GM12878 (cell line): ENCODE measurements at regions of chr6 and their contacts with region 1.

Region 1: GRCh38 chr6:37169496-37170272 is at the start of gene PIM1:
- DNase-seq: peak; percentile 62
- ATAC-seq: peak; percentile 88
- H3K4me3 ChIP-seq: peak within 1 kb of the TSS; percentile 83
- H3K27ac ChIP-seq: peak within 1 kb of the TSS; percentile 65
- H3K4me1 ChIP-seq: peaks cover 16% of the 10 kb centered on the region
- H3K27me3 ChIP-seq: no peaks in the 10 kb centered on the region
- CTCF ChIP-seq: peak in 1 of 3 experiments; percentile 6; a peak in 1 of 6 replicates
- EP300 ChIP-seq: no peak
- POLR2A ChIP-seq: peak; percentile 81
- RAD21 ChIP-seq: no peak
- polyA plus RNA-seq, gene PIM1: 0.66 to 3.0 TPM

Region 2: DNA sequence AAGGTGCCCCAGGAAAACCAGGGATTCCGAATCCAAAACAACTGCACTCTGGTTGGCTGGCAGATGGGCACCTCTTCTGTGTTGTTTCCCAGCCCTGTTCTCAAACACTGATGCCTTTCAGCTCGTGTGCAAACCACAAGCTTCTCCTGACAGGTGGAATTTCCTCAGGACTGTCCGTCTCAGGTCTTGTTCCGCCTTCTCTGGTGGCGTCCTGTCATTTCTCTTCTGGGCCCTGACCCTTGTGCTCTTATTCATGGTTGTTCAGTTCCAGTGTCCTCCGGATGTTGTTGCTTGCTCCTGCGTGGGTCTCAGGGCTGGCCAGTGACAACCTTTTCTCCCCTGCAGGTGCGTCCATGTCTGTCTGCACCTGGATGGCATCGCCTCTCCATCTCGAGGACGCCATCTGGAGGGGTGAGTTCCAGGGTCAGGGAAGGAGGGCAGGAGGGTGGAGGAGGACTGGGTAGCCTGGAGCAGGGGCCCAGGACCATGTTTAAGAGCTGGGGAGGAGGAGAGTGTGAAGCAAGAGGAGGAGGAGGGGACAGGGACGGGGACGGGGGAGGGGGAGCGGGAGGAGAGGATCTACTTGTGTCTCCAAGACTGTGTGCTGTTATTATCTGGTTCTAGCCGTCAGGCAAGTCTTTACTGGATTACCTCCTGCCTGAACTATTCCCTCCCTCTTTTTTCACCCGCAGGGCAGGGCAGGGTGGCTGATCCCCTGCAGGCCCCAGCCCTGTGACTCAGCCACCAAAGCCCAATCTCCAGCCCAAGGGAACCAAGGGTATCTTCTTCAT is 1625.0 kb before region 1 on chr6:
- CTCF ChIA-PET with region 1: no interaction called
- POLR2A ChIA-PET with region 1: no interaction called
- RAD21 ChIA-PET with region 1: no interaction called
- SMC1A ChIA-PET with region 1: no interaction called
- in situ Hi-C with region 1: no loop called
- intact Hi-C with region 1: no loop called
- DNase-seq: no peak
- ATAC-seq: no peak
- H3K4me3 ChIP-seq: no peak overlapping the region
- H3K27ac ChIP-seq: no peak overlapping the region
- H3K4me1 ChIP-seq: no peaks in the 10 kb centered on the region
- H3K27me3 ChIP-seq: no peaks in the 10 kb centered on the region; a peak in 1 of 4 replicates
- CTCF ChIP-seq: no peak
- EP300 ChIP-seq: no peak
- POLR2A ChIP-seq: no peak
- RAD21 ChIP-seq: no peak

Region 3: DNA sequence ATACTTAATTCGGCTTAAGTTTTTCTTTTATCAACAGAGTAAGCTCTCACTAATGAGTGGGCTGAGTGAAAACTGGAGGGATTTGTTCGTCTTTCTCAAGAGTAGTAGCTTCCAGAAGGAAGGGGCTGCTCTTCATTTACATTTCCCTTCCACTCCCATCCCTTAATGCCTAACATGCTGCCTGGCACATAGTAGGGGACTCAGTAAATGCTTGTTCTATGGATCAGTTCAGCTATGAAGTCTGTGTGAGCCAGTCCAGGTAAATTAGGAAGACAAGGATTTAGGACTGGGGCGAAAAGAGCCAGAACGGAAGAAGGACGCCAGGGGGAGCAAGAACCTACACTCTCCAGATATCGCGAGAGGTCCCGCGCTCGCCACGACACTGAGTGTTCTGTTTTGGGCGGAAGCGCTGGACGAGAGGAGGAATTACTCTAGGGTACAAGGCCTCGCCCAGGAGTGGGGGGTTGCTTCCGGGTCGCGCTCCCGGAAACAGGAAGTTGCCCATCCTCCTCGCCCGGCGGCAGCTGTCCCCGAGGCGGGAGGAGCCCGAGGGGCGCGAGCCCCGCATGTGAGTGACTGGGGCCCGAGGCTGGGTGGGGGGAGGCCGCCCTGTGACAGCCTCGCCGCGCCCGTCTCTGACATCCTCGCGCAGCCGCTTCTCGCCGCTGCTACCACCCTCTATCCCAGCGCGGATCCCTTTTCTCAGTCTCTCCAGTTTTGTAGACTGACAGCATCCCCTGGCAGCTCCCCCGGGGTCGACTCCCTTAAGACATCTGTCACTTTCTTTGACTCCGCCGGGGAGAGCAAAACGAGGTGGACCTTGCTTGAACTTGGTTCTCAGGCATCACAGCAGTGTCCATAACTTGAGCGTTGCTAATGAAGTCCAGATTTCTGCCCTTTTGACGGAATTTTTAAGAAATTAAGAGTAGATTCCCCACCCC is 284.0 kb before region 1 on chr6 and contains the start of gene C6orf89:
- CTCF ChIA-PET with region 1: interaction called, 7 read pairs
- POLR2A ChIA-PET with region 1: interaction called, 4 read pairs
- RAD21 ChIA-PET with region 1: interaction called, 5 read pairs
- SMC1A ChIA-PET with region 1: interaction called, 5 read pairs
- in situ Hi-C with region 1: no loop called
- intact Hi-C with region 1: loop called (anchors 5 kb)
- DNase-seq: peak; percentile 92
- ATAC-seq: peak; percentile 98
- H3K4me3 ChIP-seq: peak within 1 kb of the TSS; percentile 99
- H3K27ac ChIP-seq: peak within 1 kb of the TSS; percentile 77
- H3K4me1 ChIP-seq: no peaks in the 10 kb centered on the region
- H3K27me3 ChIP-seq: no peaks in the 10 kb centered on the region
- CTCF ChIP-seq: peak; percentile 72 to 83 (median 79)
- EP300 ChIP-seq: no peak
- POLR2A ChIP-seq: peak; percentile 88
- RAD21 ChIP-seq: peak; percentile 24; the same call in 1 of the 2 replicates
- polyA plus RNA-seq, gene C6orf89: 10.8 to 11.4 TPM

Region 4: GRCh38 chr6:37051138-37052026 is 118.3 kb before region 1 on chr6:
- CTCF ChIA-PET with region 1: interaction called, 260 read pairs
- POLR2A ChIA-PET with region 1: interaction called, 43 read pairs
- RAD21 ChIA-PET with region 1: interaction called, 255 read pairs
- SMC1A ChIA-PET with region 1: interaction called, 266 read pairs
- in situ Hi-C with region 1: loop called (anchors 5 kb)
- intact Hi-C with region 1: loop called (anchors 1 kb)
- DNase-seq: peak; percentile 59
- ATAC-seq: peak; percentile 88
- H3K4me3 ChIP-seq: no peak overlapping the region
- H3K27ac ChIP-seq: no peak overlapping the region
- H3K4me1 ChIP-seq: peaks cover 40% of the 10 kb centered on the region
- H3K27me3 ChIP-seq: no peaks in the 10 kb centered on the region
- CTCF ChIP-seq: peak; percentile 88 to 95 (median 93); a peak in 5 of 6 replicates
- EP300 ChIP-seq: no peak
- POLR2A ChIP-seq: no peak
- RAD21 ChIP-seq: peak; percentile 93

Region 5: DNA sequence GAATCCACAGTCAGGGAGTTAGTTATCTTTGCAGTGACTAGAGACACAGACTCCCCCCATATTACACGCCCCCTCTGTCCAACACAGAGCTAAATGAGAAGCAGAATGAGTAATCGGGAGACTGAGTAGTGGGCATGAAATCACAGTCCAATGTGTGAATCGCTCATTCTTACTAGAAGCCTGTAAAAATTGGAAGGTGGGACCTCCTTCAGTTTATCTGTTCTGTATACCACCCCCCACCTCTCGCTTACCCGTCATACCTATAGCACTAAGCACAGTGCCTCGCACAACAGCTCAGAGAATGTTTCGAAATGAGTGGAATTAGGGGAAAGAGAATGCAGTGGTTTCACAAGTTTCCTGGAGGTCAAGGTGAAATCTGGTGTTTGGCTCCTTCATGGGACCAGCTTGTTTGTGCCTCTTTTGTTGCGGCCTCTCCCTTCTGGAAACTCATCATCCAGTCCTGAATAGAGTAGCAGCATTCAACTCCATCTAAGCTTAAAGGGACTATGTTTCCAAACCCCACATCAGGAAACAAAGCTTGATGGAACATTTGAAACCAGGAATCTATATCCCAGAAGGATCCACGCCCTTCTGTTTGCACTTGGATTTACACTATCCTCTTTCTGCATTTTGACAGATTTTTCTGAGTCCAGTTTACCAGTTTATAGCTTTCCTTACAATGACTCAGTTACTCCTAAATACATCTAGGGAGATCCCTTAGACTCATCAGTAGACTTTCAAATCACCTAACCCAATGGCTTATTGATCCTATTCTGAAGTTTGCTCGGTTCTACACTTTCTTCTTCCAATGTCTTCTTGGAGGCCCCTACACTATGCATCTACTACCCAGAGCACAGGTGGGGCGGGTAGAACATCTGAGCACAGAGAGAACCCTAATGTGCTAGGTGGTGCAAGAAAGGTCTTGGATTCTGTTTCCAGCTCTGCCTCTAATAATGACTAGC is 58.9 kb before region 1 on chr6:
- CTCF ChIA-PET with region 1: interaction called, 6 read pairs
- POLR2A ChIA-PET with region 1: no interaction called
- RAD21 ChIA-PET with region 1: interaction called, 4 read pairs
- SMC1A ChIA-PET with region 1: interaction called, 6 read pairs
- in situ Hi-C with region 1: no loop called
- intact Hi-C with region 1: loop called (anchors 5 kb)
- DNase-seq: peak; percentile 59
- ATAC-seq: peak; percentile 96
- H3K4me3 ChIP-seq: no peak overlapping the region
- H3K27ac ChIP-seq: no peak overlapping the region
- H3K4me1 ChIP-seq: peaks cover 10% of the 10 kb centered on the region
- H3K27me3 ChIP-seq: no peaks in the 10 kb centered on the region
- CTCF ChIP-seq: no peak
- EP300 ChIP-seq: peak; percentile 56 to 65; a peak in 3 of 4 replicates
- POLR2A ChIP-seq: no peak
- RAD21 ChIP-seq: no peak

Region 6: GRCh38 chr6:37155394-37156312 is 14.0 kb before region 1 on chr6:
- CTCF ChIA-PET with region 1: interaction called, 65 read pairs
- POLR2A ChIA-PET with region 1: interaction called, 19 read pairs
- RAD21 ChIA-PET with region 1: interaction called, 72 read pairs
- SMC1A ChIA-PET with region 1: interaction called, 24 read pairs
- in situ Hi-C with region 1: no loop called
- intact Hi-C with region 1: loop called (anchors 1 kb)
- DNase-seq: peak; percentile 97
- ATAC-seq: peak; percentile 91
- H3K4me3 ChIP-seq: no peak overlapping the region; the same call in 1 of the 2 replicates
- H3K27ac ChIP-seq: peak overlapping the region; percentile 83
- H3K4me1 ChIP-seq: peaks cover 55% of the 10 kb centered on the region
- H3K27me3 ChIP-seq: no peaks in the 10 kb centered on the region
- CTCF ChIP-seq: no peak
- EP300 ChIP-seq: peak; percentile 89 to 92
- POLR2A ChIP-seq: peak; percentile 60
- RAD21 ChIP-seq: no peak

Region 7: GRCh38 chr6:37314487-37315156 is 144.9 kb after region 1 on chr6:
- CTCF ChIA-PET with region 1: interaction called, 7 read pairs
- POLR2A ChIA-PET with region 1: no interaction called
- RAD21 ChIA-PET with region 1: interaction called, 3 read pairs
- SMC1A ChIA-PET with region 1: interaction called, 10 read pairs
- in situ Hi-C with region 1: no loop called
- intact Hi-C with region 1: no loop called
- DNase-seq: no peak
- ATAC-seq: peak; percentile 89
- H3K4me3 ChIP-seq: no peak overlapping the region
- H3K27ac ChIP-seq: no peak overlapping the region
- H3K4me1 ChIP-seq: peaks cover 19% of the 10 kb centered on the region
- H3K27me3 ChIP-seq: no peaks in the 10 kb centered on the region
- CTCF ChIP-seq: peak; percentile 63 to 74 (median 73)
- EP300 ChIP-seq: no peak
- POLR2A ChIP-seq: no peak
- RAD21 ChIP-seq: peak; percentile 73